OCI-LY7 (cell line): ENCODE measurements at regions of chr3 and their contacts with region 1.

Region 1: DNA sequence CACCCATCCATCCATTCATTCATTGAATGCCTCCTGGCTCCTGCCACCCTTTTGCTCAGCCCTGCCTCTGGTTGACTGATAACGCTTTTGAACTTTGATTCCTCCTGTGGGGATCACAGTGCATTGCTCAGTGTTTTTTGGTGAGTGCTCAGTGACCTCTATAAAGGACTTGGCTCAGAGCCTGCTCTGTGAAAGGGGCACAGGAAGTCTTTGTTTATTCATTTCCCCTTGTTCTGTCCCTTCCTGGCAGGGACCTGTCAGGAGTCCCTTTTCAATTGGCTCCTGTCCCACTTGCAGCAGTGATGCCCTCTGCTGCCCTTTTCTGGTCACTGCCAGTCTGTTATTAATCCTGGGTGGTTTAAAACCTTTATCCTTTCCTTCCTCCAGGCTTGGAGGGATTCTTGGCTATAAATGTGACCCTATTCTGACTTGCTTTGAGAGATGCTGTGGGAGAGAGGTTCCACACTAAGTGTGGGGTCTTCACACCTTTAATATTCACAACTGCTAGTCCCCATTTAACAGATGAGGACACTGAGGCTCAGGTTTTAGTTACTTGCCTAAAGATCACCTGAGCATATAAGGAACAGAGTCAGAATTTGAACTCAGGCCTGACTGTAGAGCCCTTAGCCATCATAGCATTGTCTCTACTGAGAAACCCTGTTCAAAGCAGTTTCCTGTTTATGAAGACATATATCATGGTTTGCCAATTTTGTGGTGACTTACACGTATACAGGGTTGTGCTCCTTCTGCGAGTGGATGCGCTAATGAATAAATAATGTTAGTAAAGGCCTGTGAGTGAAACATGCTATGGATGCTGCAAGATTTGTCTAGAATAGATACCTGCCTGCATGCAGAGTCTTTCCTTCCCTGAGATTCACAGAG is 23.2 kb upstream of the TATDN2 start:
- DNase-seq: peak; percentile 88
- H3K4me3 ChIP-seq: no peak overlapping the region
- H3K27ac ChIP-seq: peak overlapping the region; percentile 84
- H3K4me1 ChIP-seq: peaks cover 86% of the 10 kb centered on the region
- CTCF ChIP-seq: peak; percentile 96

Region 2: DNA sequence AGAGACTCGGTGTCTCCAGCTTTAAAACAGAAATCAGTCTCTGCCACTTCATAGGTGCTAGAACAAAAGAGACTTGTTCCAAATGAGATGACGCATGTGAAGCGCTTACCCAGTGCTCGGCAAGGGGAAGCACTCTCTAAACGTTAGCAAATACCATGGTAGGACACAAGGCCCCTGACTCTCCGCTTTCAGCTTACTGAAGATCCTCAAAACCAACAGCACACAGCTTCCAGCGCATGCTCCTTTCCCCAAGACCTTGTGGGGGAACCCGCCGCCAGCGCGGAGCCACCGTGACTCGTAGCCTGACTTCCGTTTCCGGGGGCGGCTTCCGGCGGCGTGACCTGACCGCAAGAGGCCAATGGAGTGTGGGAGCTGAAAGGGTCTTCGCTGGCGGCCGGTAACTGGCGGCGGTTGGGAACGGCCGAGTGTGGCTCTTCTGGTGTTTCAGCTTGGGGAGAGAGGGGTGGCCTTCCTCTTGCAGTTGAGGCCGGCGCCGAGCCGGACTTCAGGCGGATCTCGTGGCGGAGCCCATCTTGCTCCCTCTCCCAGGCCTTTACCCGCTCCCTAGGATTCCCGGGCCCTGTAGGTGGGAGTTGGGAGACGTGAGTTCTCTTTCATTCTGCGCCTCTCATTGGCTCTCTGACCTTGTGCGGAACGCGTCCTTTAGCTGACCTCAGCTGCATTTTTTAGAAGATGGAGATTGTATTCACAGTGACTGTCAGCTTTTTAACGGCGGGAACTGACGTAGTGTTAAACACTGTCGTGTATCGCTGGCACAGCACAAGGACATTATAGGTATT is 862.1 kb before region 1 on chr3 and contains the start of gene THUMPD3:
- CTCF ChIA-PET with region 1: interaction called, 13 read pairs
- POLR2A ChIA-PET with region 1: interaction called, 3 read pairs
- intact Hi-C with region 1: no loop called
- DNase-seq: peak; percentile 90
- H3K4me3 ChIP-seq: peak within 1 kb of the TSS; percentile 77
- H3K27ac ChIP-seq: peak within 1 kb of the TSS; percentile 70
- H3K4me1 ChIP-seq: peaks cover 14% of the 10 kb centered on the region
- CTCF ChIP-seq: no peak
- total RNA-seq, gene THUMPD3: 12.4 and 20.7 TPM in 2 replicates

Region 3: DNA sequence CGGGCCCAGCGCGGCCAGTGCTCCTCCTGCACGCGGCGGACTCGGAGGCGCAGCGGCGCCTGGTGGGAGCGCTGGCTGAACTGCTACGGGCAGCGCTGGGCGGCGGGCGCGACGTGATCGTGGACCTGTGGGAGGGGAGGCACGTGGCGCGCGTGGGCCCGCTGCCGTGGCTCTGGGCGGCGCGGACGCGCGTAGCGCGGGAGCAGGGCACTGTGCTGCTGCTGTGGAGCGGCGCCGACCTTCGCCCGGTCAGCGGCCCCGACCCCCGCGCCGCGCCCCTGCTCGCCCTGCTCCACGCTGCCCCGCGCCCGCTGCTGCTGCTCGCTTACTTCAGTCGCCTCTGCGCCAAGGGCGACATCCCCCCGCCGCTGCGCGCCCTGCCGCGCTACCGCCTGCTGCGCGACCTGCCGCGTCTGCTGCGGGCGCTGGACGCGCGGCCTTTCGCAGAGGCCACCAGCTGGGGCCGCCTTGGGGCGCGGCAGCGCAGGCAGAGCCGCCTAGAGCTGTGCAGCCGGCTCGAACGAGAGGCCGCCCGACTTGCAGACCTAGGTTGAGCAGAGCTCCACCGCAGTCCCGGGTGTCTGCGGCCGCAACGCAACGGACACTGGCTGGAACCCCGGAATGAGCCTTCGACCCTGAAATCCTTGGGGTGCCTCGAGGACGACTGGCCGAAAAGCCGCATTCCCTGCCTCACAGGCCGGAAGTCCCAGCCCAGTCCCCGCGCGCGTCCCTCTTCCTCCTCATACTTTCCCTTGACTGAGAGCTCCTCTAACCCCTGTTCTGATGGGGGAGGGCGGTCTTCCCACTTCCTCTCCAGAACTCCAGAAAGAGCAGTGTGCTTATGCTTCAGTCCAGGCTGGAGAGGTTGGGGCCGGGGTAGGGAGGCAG is 309.5 kb before region 1 on chr3:
- CTCF ChIA-PET with region 1: no interaction called
- POLR2A ChIA-PET with region 1: no interaction called
- intact Hi-C with region 1: no loop called
- DNase-seq: no peak
- H3K4me3 ChIP-seq: no peak overlapping the region
- H3K27ac ChIP-seq: no peak overlapping the region
- H3K4me1 ChIP-seq: no peaks in the 10 kb centered on the region
- CTCF ChIP-seq: no peak

Region 4: GRCh38 chr3:10026084-10026890 is 198.7 kb before region 1 on chr3 and contains the start of gene FANCD2:
- CTCF ChIA-PET with region 1: no interaction called
- POLR2A ChIA-PET with region 1: no interaction called
- intact Hi-C with region 1: loop called (anchors 10 kb)
- DNase-seq: peak; percentile 90
- H3K4me3 ChIP-seq: peak within 1 kb of the TSS; percentile 98
- H3K27ac ChIP-seq: peak within 1 kb of the TSS; percentile 82
- H3K4me1 ChIP-seq: peaks cover 22% of the 10 kb centered on the region
- CTCF ChIP-seq: no peak
- total RNA-seq, gene FANCD2: 112 and 116 TPM in 2 replicates

Region 5: DNA sequence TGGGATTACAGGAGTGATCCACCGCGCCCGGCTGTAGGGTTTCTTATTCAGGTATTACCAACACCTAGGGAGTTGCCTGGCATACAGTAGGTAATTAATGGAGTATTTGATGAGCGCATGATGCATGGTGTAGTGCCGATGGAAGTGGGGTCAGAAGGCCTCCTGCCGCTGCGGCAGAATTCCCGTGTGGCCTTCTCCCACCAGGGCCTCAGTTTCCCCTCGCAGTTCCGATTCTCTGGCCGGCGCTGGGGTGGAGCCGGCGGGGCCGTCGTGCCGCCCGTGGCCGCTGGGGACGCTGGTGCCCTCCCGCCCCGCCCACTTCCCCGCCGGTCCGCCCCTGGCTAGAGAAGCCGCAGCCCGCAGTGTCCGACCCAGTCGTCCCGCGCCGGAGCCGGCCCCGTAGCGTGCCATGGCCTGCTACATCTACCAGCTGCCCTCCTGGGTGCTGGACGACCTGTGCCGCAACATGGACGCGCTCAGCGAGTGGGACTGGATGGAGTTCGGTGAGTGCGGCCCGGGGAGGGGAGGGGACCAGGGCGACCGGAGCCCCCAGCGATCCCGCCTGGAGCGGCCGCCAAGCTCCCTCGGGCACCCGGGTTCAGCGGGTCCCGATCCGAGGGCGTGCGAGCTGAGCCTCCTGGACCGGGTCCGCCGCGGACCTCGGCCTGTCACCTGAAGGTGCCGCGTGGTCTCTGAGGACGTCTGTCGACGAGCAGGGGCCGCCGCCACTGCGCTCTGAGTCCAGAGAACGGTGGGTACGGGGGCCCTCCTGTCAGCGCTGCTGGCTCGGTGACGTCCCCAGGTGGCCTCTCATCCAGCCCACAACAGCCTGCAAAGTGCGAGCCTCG is 60.3 kb before region 1 on chr3 and contains the start of gene IRAK2:
- CTCF ChIA-PET with region 1: no interaction called
- POLR2A ChIA-PET with region 1: interaction called, 3 read pairs
- intact Hi-C with region 1: loop called (anchors 1 kb)
- DNase-seq: peak; percentile 68
- H3K4me3 ChIP-seq: peak within 1 kb of the TSS; percentile 70
- H3K27ac ChIP-seq: no peak within 1 kb of the TSS
- H3K4me1 ChIP-seq: peaks cover 13% of the 10 kb centered on the region
- CTCF ChIP-seq: peak; percentile 73
- total RNA-seq, gene IRAK2: 1.1 and 1.4 TPM in 2 replicates

Region 6: GRCh38 chr3:10198761-10199649 is 26.0 kb before region 1 on chr3:
- CTCF ChIA-PET with region 1: interaction called, 8 read pairs
- POLR2A ChIA-PET with region 1: interaction called, 11 read pairs
- intact Hi-C with region 1: loop called (anchors 2 kb)
- DNase-seq: peak; percentile 82
- H3K4me3 ChIP-seq: no peak overlapping the region
- H3K27ac ChIP-seq: peak overlapping the region; percentile 79
- H3K4me1 ChIP-seq: peaks cover 66% of the 10 kb centered on the region
- CTCF ChIP-seq: no peak

Region 7: DNA sequence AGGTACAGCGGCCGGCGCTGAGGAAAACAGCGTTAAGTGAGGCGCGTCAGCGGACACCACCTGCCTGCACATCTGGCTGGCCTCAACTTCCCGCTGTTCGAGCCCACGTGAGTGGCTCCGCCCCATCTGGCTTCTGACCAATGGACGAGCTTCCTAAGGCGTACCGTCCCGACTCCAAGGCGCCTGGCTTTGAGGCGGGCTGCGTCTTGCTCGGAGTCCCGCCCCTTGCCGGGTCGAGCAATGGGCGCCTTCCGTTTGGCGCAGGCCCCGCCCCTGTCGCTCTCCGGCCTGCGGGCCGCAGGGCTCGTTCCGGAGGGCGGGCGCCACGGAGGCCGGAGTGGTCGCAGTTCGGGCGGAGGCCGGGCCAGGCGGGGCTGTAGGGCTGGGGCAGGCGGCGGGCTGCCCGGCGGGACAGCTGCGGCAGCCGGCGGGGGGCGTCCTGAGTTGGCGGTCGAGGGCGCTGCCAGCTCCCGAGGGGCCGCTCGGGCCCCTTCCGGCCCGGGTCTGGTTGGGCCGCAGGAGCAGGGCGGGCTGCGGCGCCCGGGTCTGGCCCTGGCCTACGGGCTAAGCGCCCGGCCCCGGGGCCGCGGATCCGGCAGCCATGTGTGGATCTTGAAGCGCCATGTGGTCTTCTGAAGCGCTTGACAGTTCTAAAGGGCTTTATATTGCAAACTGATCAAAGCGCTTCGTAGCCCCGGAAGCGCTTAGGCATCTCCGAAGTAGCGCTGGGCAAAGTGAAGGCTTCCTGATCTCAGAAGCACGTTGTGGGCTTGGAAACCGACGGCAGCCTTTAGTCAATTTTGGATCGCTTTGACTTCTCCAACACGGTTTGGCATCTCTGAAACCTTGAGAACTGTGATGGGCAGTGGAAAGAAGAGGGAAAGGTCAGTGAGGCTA is 23.4 kb after region 1 on chr3 and contains the start of gene TATDN2:
- CTCF ChIA-PET with region 1: interaction called, 5 read pairs
- POLR2A ChIA-PET with region 1: interaction called, 11 read pairs
- intact Hi-C with region 1: loop called (anchors 1 kb)
- DNase-seq: peak; percentile 100
- H3K4me3 ChIP-seq: peak within 1 kb of the TSS; percentile 88
- H3K27ac ChIP-seq: peak within 1 kb of the TSS; percentile 82
- H3K4me1 ChIP-seq: peaks cover 21% of the 10 kb centered on the region
- CTCF ChIP-seq: peak; percentile 26; the same call in 1 of the 2 replicates
- total RNA-seq, gene TATDN2: 22.0 and 22.9 TPM in 2 replicates

Region 8: GRCh38 chr3:10437272-10437994 is 212.4 kb after region 1 on chr3:
- CTCF ChIA-PET with region 1: no interaction called
- POLR2A ChIA-PET with region 1: no interaction called
- intact Hi-C with region 1: no loop called
- DNase-seq: no peak
- H3K4me3 ChIP-seq: no peak overlapping the region
- H3K27ac ChIP-seq: no peak overlapping the region
- H3K4me1 ChIP-seq: peaks cover 28% of the 10 kb centered on the region
- CTCF ChIP-seq: no peak